HEK293T (cell line): ENCODE measurements at regions of chr1 and their contacts with region 1.

Region 1: DNA sequence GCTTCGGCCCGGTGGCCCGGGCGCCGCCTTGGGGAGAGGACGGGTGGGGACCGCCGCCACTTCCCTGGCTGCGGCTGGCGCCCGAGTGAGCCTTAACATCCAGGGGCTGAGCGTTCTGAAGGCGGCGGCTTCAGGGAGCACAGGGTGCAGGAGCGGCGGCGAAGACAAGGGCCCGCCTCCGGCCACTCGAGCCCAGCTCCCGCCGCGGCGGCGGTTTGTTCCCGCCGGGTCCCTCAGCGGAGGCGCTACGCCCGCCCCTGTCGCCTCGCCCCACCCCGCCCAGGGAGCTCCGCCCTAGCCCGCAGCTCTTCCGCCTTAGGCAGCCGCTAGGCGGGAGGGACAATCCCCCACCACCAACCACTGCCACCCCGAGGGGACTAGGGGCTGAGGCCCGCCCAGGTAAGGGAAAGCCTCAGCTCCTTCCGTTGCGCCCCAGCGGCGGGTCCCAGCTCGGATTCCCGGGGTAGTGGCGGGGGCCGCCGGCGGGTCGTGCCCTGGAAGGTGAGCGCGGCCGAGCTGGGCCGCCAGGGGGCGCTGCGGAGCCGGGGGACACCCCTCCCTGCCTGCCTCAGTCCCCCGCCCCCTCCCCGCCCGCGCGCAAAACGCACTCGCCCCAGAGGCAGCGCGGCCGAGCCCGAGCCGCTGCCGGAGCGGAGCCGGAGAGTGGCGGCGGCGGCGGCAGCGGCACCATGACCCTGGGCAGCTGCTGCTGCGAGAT is at the start of gene FOXD2:
- DNase-seq: peak; percentile 92

Region 2: DNA sequence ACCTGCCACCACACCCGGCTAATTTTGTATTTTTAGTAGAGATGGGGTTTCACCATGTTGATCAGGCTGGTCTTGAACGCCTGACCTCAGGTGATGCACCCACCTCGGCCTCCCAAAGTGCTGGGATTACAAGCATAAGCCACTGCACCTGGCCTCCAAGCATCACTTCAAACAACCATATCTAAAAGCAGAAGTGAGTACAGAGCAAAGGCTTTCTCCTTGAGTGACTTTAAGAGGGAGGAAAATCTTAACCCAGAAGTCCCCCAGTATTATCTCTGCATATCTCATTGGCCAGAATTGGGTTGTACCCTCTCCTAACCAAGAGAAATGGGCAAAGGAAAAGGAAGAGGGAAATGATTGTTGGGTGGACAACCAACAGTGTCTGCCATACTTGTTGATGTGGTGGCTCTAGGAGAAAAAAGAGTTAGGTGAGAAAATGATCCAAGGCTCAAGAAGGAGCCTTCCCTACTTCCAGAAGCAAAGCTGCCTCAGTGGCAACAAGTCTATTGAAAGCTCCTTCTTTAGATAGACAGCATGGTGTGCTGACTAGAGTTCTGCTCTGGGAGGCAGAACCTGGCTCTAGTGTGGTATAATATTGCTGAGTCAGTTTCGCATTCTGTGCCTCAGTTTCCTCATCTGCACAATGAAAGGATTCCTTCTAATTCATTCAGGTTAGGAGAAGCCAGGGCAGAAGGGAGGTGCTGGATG is 38.3 kb before region 1 on chr1:
- CTCF ChIA-PET with region 1: no interaction called
- POLR2A ChIA-PET with region 1: no interaction called
- DNase-seq: no peak

Region 3: DNA sequence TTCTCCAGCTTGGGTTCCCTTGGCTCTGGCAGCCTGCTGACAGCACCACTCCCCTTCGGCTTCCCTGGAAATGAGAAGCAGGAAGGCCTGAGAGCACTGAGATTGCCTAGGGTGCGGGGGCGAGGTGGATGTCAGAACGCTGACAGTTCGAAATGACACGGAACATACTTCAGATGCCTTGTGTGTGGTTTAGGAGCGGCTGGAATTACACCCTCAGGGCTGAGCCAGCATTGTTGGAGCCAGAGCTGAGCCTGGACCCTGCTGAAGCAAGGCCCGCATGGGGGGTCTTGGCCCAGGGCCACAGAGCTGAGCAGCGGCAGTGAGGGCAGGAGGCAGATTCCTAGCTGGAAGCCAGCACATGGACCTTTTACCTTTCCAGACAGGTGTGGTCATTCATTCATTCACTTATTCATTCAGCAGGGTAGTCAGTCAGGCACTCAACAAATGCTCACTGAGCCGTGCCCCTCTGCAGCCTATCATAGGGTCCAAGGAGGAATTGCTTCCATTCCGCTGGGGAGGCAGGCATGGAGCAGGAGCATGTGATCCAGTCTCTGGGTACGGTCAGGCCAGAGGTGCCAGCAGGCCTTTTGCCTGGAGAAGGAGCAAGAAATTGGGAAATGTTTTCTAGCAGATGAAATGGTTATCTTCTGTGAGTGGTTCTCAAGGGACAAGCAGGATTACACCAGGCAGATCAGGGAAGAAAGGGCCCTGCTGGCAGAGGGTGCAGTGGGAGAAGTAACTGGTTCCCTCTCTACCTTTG is 28.1 kb before region 1 on chr1:
- CTCF ChIA-PET with region 1: no interaction called
- POLR2A ChIA-PET with region 1: no interaction called
- DNase-seq: no peak

Region 4: DNA sequence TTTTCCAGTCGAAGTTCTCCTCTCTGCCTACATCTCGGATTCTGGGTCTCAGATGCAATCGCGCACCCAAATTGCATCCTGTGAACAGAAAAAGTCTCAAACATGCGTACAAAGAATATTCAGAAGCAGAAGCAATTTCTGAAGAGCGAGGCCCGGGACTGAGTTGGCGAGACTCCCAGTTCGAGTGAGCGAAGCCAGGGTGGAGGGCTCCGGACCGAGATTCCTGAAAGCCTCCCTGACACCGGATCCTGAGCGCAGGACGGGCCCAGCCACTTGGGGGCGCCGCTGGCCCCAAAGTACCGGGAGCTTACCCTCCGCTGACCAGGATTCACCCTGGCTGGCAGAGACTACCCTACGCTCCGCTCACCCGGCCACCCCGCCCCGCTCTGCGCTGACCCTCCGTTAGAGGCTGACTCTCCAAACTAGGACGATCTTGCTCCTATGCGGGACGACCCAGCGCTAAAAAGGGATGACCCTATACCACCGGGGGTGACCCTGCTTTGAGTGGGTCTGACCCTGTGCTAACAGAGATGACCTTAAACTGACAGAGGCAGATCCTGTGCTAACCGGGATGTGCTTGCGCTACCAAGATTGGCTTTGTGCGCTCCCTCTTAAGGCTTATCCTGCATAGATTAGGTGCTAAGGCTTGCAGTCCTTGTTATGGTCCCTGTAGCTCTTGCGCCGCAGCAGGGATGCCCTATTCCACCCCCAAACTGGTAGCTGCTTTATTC is 12.4 kb after region 1 on chr1:
- CTCF ChIA-PET with region 1: interaction called, 12 read pairs
- POLR2A ChIA-PET with region 1: interaction called, 19 read pairs
- DNase-seq: peak; percentile 66

Region 5: GRCh38 chr1:47465605-47466004 is 28.0 kb after region 1 on chr1:
- CTCF ChIA-PET with region 1: interaction called, 12 read pairs
- POLR2A ChIA-PET with region 1: no interaction called
- DNase-seq: no peak

Region 6: DNA sequence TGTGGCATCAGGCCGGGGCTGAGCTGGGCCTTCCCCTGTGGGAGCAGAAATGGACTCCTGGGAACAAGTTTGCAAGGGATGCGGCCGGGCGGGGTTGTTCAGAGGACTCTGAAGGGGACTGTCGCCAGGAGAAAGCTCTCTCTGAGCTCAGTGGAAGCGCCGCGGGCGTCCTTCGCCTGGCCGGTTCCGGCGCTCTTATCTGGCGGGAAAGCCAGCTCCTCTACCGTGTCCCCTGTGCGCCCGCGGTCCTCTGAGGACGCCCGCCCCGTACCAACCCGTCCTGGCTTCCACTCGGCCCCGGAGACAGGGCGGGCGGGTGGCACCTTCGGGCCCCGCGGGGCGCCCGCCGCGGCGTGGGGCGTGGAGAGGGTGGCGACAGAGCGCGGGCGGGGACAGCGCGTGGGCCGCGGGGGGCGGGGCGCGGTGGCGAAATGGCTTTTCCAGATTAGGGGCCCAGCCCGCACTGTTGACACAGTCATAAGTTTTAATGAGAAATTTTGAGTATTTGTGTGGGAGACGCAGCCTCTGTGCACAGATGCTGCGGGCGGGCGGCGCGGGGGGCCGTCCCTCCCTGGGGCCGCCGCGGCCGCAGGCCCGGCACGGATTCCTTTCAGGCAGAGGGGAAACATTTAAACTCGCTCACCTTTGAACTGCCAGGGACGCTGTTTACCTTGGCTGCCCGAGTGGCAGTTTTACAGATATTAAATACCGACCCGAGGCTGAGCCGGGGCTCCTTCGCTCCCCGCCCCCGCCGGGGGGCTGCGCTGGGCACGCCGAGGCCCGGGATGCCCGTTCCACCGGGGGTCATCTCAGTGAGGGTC is 70.5 kb after region 1 on chr1:
- CTCF ChIA-PET with region 1: interaction called, 8 read pairs
- POLR2A ChIA-PET with region 1: interaction called, 15 read pairs
- DNase-seq: peak; percentile 63

Region 7: GRCh38 chr1:47703981-47704596 is 266.5 kb after region 1 on chr1:
- CTCF ChIA-PET with region 1: interaction called, 41 read pairs
- POLR2A ChIA-PET with region 1: interaction called, 9 read pairs
- DNase-seq: no peak

Region 8: GRCh38 chr1:47710329-47711071 is 272.9 kb after region 1 on chr1:
- CTCF ChIA-PET with region 1: interaction called, 41 read pairs
- POLR2A ChIA-PET with region 1: interaction called, 18 read pairs
- DNase-seq: peak; percentile 93

Region 9: GRCh38 chr1:47725992-47726855 is 288.6 kb after region 1 on chr1:
- CTCF ChIA-PET with region 1: interaction called, 76 read pairs
- POLR2A ChIA-PET with region 1: interaction called, 11 read pairs
- DNase-seq: peak; percentile 85